Activated CD8-positive, alpha-beta memory T cell treated with anti-CD3 and anti-CD28 coated beads, Interleukin-2, amount 10 ng/mL, durations not matched to agents 7 days and 5 days (primary cell): ENCODE measurements at regions of chr10 and their contacts with region 1.

Region 1: DNA sequence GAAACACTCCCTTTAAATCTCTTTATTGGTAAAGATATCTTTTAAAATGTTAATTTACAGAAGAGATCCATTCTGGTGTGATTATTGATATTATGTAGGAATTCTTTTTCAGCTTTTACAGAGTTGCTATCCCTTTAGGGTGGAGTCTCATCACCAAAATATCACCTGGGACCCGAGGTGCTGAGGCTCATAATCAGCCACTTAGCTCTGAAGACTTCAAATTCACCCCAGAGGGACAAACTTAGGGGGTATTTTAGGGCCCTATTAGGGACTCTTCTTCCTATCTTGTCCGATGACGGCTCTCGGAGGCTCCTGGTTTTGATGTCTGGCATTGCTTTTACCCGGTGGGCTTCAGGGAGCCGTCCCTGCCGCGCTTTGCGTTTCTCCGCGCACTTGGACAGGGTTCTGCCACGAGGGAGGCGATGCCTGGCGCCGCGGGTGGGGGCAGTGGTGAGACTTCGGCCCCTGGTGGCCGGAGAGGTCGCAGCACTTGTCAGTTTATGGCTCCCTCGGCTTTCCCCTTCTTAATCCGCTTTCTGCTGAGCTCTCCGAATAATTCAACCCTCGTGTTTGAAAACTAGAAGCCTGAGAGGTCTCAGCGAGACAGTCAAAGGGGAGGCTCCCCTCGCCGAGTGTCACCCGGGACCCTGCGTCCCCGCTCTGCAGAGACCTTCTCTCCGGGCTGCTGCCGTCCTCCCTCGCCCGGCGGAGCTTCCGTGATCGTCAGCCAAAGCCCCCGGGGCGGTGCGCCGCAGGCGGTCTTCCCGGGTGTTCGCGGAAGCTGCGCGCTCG is 27.8 kb downstream of the RBM20 start:
- DNase-seq: peak; percentile 85
- ATAC-seq: peak; percentile 98
- H3K4me3 Mint-ChIP-seq: peak overlapping the region; percentile 79
- H3K27ac Mint-ChIP-seq: peak overlapping the region; percentile 69
- H3K4me1 Mint-ChIP-seq: peaks cover 2% of the 10 kb centered on the region
- H3K27me3 Mint-ChIP-seq: peaks cover 50% of the 10 kb centered on the region

Region 2: DNA sequence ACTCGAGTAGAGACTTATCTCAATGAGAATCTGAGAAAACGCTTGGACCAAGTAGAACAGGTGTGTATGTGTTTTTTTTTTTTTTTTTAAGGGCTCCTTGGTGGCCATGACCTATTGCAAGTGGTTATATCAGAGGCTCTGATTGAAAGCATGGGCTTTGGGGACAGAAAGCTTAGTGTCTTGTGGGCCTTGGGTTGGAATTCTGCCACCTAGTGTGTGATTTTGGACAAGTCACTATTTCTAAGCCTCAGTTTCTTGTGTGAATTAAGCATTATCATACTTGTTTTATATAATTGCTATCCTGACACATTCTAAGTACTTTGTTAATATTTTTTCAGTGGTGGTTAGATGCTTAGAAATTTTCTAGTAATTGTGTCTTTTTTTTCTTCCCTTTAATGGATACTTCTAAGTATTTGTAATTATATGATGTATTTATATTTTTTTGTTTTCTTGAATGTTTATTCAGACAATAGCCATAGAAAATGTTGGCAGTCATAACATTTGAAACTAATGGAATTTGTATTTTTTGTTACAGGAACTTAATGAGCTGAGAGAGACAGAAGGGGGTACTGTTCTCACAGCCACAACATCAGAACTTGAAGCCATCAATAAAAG is 71.4 kb before region 1 on chr10:
- CTCF ChIA-PET with region 1: interaction called, 11 read pairs
- DNase-seq: peak; percentile 55
- ATAC-seq: peak; percentile 71
- H3K4me3 Mint-ChIP-seq: no peak overlapping the region
- H3K27ac Mint-ChIP-seq: peak overlapping the region; percentile 11
- H3K4me1 Mint-ChIP-seq: peaks cover 1% of the 10 kb centered on the region
- H3K27me3 Mint-ChIP-seq: no peaks in the 10 kb centered on the region

Region 3: DNA sequence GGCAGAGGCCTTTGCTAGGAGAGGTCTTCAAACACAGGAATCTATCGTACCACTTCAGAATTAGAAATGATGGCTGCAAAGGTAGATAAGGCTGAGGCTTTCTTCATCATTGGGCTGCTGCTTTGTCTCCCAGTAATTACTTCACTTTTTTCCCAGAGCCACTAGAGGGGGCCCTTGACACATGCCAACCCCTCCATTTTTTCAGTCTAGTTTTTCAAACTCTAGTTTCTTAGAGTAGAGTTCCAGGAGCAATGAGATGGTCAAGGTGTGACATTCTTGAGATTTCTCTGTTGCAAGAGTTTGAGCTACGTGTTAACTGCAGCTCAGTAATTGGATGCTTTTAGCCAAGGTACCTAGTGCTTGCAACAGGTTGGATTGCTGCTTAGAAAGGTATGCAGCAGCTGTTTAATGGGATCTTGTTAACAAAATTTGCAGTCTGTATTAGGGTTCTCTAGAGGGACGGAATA is 61.6 kb before region 1 on chr10:
- CTCF ChIA-PET with region 1: interaction called, 37 read pairs
- DNase-seq: peak; percentile 66
- ATAC-seq: peak; percentile 54
- H3K4me3 Mint-ChIP-seq: no peak overlapping the region
- H3K27ac Mint-ChIP-seq: no peak overlapping the region
- H3K4me1 Mint-ChIP-seq: peaks cover 43% of the 10 kb centered on the region
- H3K27me3 Mint-ChIP-seq: no peaks in the 10 kb centered on the region

Region 4: GRCh38 chr10:110617425-110618229 is 54.4 kb before region 1 on chr10:
- CTCF ChIA-PET with region 1: interaction called, 37 read pairs
- DNase-seq: no peak
- ATAC-seq: no peak
- H3K4me3 Mint-ChIP-seq: no peak overlapping the region
- H3K27ac Mint-ChIP-seq: no peak overlapping the region
- H3K4me1 Mint-ChIP-seq: peaks cover 40% of the 10 kb centered on the region
- H3K27me3 Mint-ChIP-seq: peaks cover 7% of the 10 kb centered on the region

Region 5: GRCh38 chr10:110643653-110644597 is 28.1 kb before region 1 on chr10 and contains the start of gene RBM20:
- CTCF ChIA-PET with region 1: interaction called, 15 read pairs
- DNase-seq: no peak
- ATAC-seq: peak; percentile 71
- H3K4me3 Mint-ChIP-seq: peak within 1 kb of the TSS; percentile 70
- H3K27ac Mint-ChIP-seq: peak within 1 kb of the TSS; percentile 18
- H3K4me1 Mint-ChIP-seq: peaks cover 19% of the 10 kb centered on the region
- H3K27me3 Mint-ChIP-seq: peaks cover 75% of the 10 kb centered on the region
- total RNA-seq, gene RBM20: 0.06 to 0.07 TPM

Region 6: DNA sequence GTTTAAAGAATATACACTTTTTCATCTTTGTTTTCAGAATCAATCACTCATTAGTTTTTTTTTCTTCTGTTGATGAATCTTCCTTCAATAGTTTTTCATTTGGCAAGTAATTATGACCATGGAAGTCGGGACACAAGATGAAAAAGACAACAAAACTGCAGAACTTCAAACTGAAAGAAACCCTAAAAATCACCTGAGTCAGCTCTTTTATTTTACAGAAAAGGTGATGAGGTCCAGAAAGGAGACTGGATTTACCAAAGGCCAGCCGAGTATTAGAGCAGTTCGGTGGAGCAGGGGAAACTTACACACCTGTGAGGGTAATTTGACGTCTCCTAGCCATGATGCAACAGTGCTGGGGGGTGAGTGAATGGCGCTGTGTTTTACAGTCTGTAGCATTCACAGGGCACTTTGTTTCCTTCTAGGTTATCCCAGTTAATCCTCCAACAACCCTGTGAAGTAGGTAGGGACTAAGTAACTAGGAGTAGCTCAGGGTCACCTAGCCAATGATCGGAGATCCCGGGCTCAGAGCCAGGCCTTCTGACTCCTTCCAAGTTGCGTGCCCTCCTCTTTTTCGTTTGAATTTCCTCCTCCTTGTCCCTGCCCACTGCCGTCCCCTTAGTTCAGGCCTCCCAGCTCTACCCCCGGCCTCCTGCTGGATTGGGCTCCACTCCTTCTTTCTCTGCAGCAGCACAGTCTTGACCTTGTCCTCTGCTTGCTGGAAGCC is 13.9 kb before region 1 on chr10:
- CTCF ChIA-PET with region 1: interaction called, 42 read pairs
- DNase-seq: no peak
- ATAC-seq: no peak
- H3K4me3 Mint-ChIP-seq: no peak overlapping the region
- H3K27ac Mint-ChIP-seq: no peak overlapping the region
- H3K4me1 Mint-ChIP-seq: peaks cover 18% of the 10 kb centered on the region
- H3K27me3 Mint-ChIP-seq: peaks cover 39% of the 10 kb centered on the region